GM10248 (cell line): ENCODE measurements at regions of chr4 and their contacts with region 1.

Region 1: GRCh38 chr4:76733068-76733771 is 164.7 kb downstream of the SOWAHB start:
- DNase-seq: no peak
- CTCF ChIP-seq: peak; percentile 33

Region 2: GRCh38 chr4:76680952-76681351 is 52.3 kb before region 1 on chr4:
- CTCF ChIA-PET with region 1: no interaction called
- POLR2A ChIA-PET with region 1: no interaction called
- DNase-seq: no peak
- CTCF ChIP-seq: no peak

Region 3: GRCh38 chr4:76712564-76712963 is 20.7 kb before region 1 on chr4:
- CTCF ChIA-PET with region 1: interaction called, 22 read pairs
- POLR2A ChIA-PET with region 1: no interaction called
- DNase-seq: no peak
- CTCF ChIP-seq: no peak

Region 4: DNA sequence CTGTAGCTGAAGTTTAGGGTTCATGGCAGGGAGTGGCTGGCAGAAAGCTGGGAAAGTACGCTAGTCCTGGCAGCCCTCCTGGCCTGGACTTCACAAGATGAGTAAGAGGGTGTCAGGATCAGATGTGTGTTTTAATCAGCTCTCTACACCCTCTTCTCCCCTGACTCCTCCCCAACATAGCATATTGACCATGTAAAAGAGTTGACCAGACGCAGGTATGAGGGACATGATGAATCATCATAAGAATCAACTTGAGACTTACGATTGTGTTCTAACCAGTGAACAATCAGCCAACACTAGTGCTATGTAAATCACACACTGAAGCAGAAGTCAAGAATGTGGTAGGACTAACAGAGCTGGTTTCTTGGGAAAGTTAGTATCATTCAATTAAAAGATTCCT is 159.4 kb after region 1 on chr4:
- CTCF ChIA-PET with region 1: no interaction called
- POLR2A ChIA-PET with region 1: no interaction called
- DNase-seq: no peak
- CTCF ChIP-seq: no peak